AG04449 (cell line): ENCODE measurements at regions of chr20 and their contacts with region 1.

Region 1: DNA sequence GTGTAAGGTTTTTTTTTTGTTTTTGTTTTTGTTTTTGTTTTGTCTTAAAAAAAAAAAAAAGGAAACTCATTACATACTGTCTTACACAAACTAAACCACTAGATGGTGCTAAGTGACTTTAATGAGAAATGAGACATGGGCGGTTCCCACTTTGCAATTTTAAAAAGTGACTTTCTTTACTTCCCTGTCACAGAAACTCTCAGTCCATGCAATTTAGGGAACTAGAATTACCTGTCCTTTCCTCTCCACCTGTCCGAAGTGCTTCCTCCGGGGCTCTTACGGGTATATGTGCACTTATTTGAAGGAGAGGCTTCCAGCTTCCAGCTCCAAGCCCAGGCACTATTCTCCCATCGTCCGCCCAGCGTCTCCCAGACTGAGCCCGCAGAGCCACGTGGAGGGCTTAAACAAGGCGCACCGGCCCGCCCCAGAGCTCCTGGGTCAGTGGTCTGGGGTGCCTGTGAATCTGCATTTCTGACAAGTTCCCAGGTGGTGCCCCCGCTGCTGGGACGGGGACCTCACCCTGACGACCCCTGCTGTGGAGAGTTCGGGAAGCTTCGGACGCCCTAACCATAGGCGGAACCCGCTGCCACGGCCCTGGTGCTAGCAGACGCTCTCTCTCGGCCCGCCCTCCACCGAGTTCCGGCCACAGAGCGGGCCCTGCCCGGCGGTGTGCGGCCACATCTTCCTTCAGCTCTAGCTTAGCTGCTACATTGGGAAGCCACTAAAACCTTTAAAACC is 26.1 kb downstream of the BFSP1 start:
- DNase-seq: no peak
- H3K4me3 ChIP-seq: peak overlapping the region; percentile 61
- CTCF ChIP-seq: peak; percentile 30

Region 2: GRCh38 chr20:17617551-17618223 is 112.6 kb after region 1 on chr20:
- CTCF ChIA-PET with region 1: interaction called, 48 read pairs
- POLR2A ChIA-PET with region 1: interaction called, 3 read pairs
- DNase-seq: no peak
- H3K4me3 ChIP-seq: no peak overlapping the region
- CTCF ChIP-seq: peak; percentile 66

Region 3: GRCh38 chr20:17643531-17644188 is 138.6 kb after region 1 on chr20:
- CTCF ChIA-PET with region 1: interaction called, 27 read pairs
- POLR2A ChIA-PET with region 1: no interaction called
- DNase-seq: no peak
- H3K4me3 ChIP-seq: no peak overlapping the region
- CTCF ChIP-seq: no peak

Region 4: DNA sequence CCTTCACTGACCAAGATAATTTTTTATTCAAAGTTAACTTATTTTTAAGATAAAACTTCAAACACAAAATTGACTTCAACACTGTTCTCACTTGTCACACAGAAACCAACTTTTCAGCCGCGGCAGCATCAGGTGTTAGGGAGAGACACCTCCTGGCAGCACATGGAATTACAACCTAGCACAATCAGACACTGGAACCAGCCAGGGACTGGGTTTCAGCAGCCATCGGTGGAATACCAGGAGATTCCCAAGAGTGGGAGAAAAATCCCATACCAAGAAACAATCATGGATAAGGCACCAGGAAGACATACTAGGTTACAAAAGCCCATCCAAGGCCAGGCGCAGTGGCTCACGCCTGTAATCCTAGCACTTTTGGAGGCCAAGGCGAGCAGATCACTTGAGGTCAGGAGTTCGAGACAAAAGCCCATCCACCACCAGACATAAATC is 393.5 kb after region 1 on chr20:
- CTCF ChIA-PET with region 1: interaction called, 31 read pairs
- POLR2A ChIA-PET with region 1: no interaction called
- DNase-seq: no peak
- H3K4me3 ChIP-seq: no peak overlapping the region
- CTCF ChIP-seq: peak; percentile 88

Region 5: GRCh38 chr20:17995967-17996819 is 491.1 kb after region 1 on chr20:
- CTCF ChIA-PET with region 1: interaction called, 27 read pairs
- POLR2A ChIA-PET with region 1: no interaction called
- DNase-seq: no peak
- H3K4me3 ChIP-seq: no peak overlapping the region
- CTCF ChIP-seq: peak; percentile 79